ENCODE measurements at regions of chr9 and their contacts with region 1.

Region 1: GRCh38 chr9:32526041-32526706 is at the start of gene RIGI:
- DNase-seq: peak; percentile 98
- H3K4me3 ChIP-seq: peak within 1 kb of the TSS; percentile 62 to 79 (median 74)
- H3K27ac ChIP-seq: peak within 1 kb of the TSS; percentile 77 to 89 (median 82)
- H3K4me1 ChIP-seq: peaks cover 8 to 47% (median 40%) of the 10 kb centered on the region in 4 donors
- H3K27me3 ChIP-seq: no peaks in the 10 kb centered on the region
- CTCF ChIP-seq: peak in 2 of 3 experiments; percentile 31 to 34
- EP300 ChIP-seq: no peak
- POLR2A ChIP-seq: no peak
- total RNA-seq, gene RIGI: 6.5 to 10.1 (median 8.2) TPM

Region 2: DNA sequence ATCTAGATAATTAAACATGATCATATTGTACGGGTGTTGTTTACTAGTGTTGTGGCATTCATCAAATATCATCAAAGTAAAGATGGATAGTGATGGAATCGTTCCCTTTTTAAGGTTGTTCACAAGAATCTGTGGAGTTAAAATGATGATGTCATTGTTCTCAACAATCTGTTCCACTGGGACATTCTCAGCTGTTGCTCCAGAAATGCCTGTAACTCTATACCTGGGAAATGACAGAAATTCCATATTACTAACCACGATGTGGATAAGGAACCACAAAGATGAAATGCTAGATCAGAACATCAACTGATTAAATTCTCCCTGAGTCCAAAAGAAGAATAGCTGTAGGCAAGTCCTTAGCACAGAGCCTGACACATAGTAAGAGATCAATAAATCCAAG is 38.2 kb before region 1 on chr9:
- intact Hi-C with region 1: no loop called
- DNase-seq: no peak
- H3K4me3 ChIP-seq: no peak overlapping the region
- H3K27ac ChIP-seq: no peak overlapping the region
- H3K4me1 ChIP-seq: no peaks in the 10 kb centered on the region
- H3K27me3 ChIP-seq: no peaks in the 10 kb centered on the region
- CTCF ChIP-seq: no peak
- EP300 ChIP-seq: no peak
- POLR2A ChIP-seq: no peak

Region 3: GRCh38 chr9:32558408-32558934 is 32.3 kb after region 1 on chr9:
- intact Hi-C with region 1: loop called (anchors 5 kb)
- DNase-seq: no peak
- H3K4me3 ChIP-seq: no peak overlapping the region
- H3K27ac ChIP-seq: no peak overlapping the region
- H3K4me1 ChIP-seq: peaks cover 0 to 12% (median 2%) of the 10 kb centered on the region in 4 donors
- H3K27me3 ChIP-seq: no peaks in the 10 kb centered on the region
- CTCF ChIP-seq: no peak
- EP300 ChIP-seq: no peak
- POLR2A ChIP-seq: no peak

Region 4: GRCh38 chr9:32571969-32572899 is 46.1 kb after region 1 on chr9:
- intact Hi-C with region 1: loop called (anchors 5 kb)
- DNase-seq: no peak
- H3K4me3 ChIP-seq: peak overlapping the region; percentile 79 to 83 (median 83)
- H3K27ac ChIP-seq: peak overlapping the region; percentile 90 to 93 (median 91)
- H3K4me1 ChIP-seq: peaks cover 24 to 39% (median 30%) of the 10 kb centered on the region in 4 donors
- H3K27me3 ChIP-seq: no peaks in the 10 kb centered on the region
- CTCF ChIP-seq: peak; percentile 47 to 60 (median 48)
- EP300 ChIP-seq: no peak
- POLR2A ChIP-seq: no peak